H1 (cell line): ENCODE measurements at regions of chr7 and their contacts with region 1.

Region 1: DNA sequence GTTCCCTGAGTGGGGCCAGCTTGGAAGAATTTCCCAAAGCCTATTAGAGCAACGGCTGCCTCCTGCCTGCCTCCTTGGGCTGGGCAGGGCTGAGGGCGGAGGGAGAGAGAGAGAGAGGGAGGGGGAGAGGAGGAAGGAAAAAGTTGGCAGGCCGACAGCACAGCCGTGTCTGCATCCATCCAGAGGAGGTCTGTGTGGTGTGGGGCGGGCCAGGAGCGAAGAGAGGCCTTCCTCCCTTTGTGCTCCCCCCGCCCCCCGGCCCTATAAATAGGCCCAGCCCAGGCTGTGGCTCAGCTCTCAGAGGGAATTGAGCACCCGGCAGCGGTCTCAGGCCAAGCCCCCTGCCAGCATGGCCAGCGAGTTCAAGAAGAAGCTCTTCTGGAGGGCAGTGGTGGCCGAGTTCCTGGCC is at the start of gene AQP1:
- DNase-seq: no peak
- H3K4me3 ChIP-seq: no peak within 1 kb of the TSS
- H3K27ac ChIP-seq: no peak within 1 kb of the TSS
- H3K4me1 ChIP-seq: peaks cover 0 to 10% (median 4%) of the 10 kb centered on the region in 4 experiments; a peak in 4 of 7 replicates
- H3K27me3 ChIP-seq: peaks cover 0 to 2% (median 0%) of the 10 kb centered on the region in 4 experiments; a peak in 1 of 7 replicates
- CTCF ChIP-seq: no peak
- EP300 ChIP-seq: no peak
- POLR2A ChIP-seq: no peak
- RAD21 ChIP-seq: no peak
- total RNA-seq, gene AQP1: 0.17 and 0.19 TPM in 2 replicates

Region 2: GRCh38 chr7:30791114-30791779 is 120.3 kb before region 1 on chr7:
- CTCF ChIA-PET with region 1: interaction called, 14 read pairs
- POLR2A ChIA-PET with region 1: no interaction called
- DNase-seq: peak in 1 of 2 experiments; percentile 54
- H3K4me3 ChIP-seq: no peak overlapping the region
- H3K27ac ChIP-seq: no peak overlapping the region
- H3K4me1 ChIP-seq: 0 out of 7 replicates have a peak, but pooled peaks cover 0 to 3% (median 0%) of the 10 kb centered on the region in 4 experiments
- H3K27me3 ChIP-seq: no peaks in the 10 kb centered on the region
- CTCF ChIP-seq: peak; percentile 56 to 66 (median 60)
- EP300 ChIP-seq: no peak
- POLR2A ChIP-seq: no peak
- RAD21 ChIP-seq: peak; percentile 42 to 58; a peak in 3 of 4 replicates

Region 3: GRCh38 chr7:30800785-30801252 is 110.7 kb before region 1 on chr7:
- CTCF ChIA-PET with region 1: interaction called, 19 read pairs
- POLR2A ChIA-PET with region 1: no interaction called
- DNase-seq: peak; percentile 21 to 66
- H3K4me3 ChIP-seq: no peak overlapping the region
- H3K27ac ChIP-seq: no peak overlapping the region
- H3K4me1 ChIP-seq: no peaks in the 10 kb centered on the region
- H3K27me3 ChIP-seq: no peaks in the 10 kb centered on the region
- CTCF ChIP-seq: peak; percentile 31 to 88 (median 77)
- EP300 ChIP-seq: no peak
- POLR2A ChIP-seq: no peak
- RAD21 ChIP-seq: peak; percentile 98 to 99

Region 4: GRCh38 chr7:30880090-30880720 is 31.4 kb before region 1 on chr7:
- CTCF ChIA-PET with region 1: interaction called, 20 read pairs
- POLR2A ChIA-PET with region 1: no interaction called
- DNase-seq: no peak
- H3K4me3 ChIP-seq: no peak overlapping the region
- H3K27ac ChIP-seq: no peak overlapping the region
- H3K4me1 ChIP-seq: peaks cover 0 to 27% (median 12%) of the 10 kb centered on the region in 4 experiments; a peak in 6 of 7 replicates
- H3K27me3 ChIP-seq: no peaks in the 10 kb centered on the region
- CTCF ChIP-seq: no peak
- EP300 ChIP-seq: no peak
- POLR2A ChIP-seq: no peak
- RAD21 ChIP-seq: no peak

Region 5: GRCh38 chr7:30931161-30931928 is 19.8 kb after region 1 on chr7:
- CTCF ChIA-PET with region 1: interaction called, 55 read pairs
- POLR2A ChIA-PET with region 1: no interaction called
- DNase-seq: peak in 1 of 2 experiments; percentile 37
- H3K4me3 ChIP-seq: no peak overlapping the region
- H3K27ac ChIP-seq: no peak overlapping the region
- H3K4me1 ChIP-seq: peaks cover 0 to 9% (median 6%) of the 10 kb centered on the region in 4 experiments; a peak in 6 of 7 replicates
- H3K27me3 ChIP-seq: 0 out of 7 replicates have a peak, but pooled peaks cover 0 to 8% (median 0%) of the 10 kb centered on the region in 4 experiments
- CTCF ChIP-seq: no peak
- EP300 ChIP-seq: no peak
- POLR2A ChIP-seq: no peak
- RAD21 ChIP-seq: no peak; a peak in 1 of 4 replicates

Region 6: DNA sequence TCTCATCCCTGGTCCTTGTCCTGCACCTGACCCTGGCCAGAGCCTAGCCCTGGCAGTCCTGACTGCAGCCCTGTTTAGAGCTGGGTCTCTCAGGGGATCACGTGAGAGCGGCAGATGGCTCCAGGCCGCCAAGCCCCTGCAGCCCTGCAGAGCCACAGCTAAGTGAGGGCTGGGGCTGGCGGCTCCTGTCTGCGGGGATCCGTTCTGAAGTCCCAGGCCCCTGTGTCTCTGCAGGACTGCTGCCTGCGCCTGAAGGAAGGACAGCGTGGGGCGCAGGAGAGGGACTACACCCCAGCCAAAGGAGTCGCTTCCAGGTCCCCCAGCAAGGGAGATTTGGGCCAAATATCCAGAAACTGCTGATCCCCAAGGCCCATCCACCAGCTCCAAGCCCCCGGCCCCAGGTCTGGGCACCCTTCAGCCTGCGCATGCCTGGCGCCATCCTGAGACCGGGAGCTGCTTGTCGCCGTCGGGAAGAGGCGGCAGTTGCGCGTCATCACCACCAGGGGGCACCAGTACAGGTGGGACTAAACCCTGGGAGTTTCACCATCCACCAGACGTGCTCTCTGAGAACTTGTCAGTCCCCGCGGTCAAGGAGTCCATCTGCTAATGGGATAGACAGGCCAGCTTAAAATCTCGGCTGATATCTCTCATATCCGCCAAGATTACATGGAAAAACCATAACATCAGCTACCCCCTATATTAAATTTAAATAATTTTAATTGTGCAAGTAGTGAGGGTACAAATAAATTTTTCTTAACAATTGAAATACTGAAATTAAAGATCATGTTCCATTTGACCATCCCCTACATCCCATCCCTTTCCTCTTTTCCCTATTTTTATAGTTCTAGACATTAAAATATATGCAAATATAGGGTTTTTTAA is 27.1 kb after region 1 on chr7:
- CTCF ChIA-PET with region 1: interaction called, 55 read pairs
- POLR2A ChIA-PET with region 1: interaction called, 3 read pairs
- DNase-seq: peak; percentile 91 to 98
- H3K4me3 ChIP-seq: peak overlapping the region in 3 of 4 experiments; percentile 31 to 52 (median 34); a peak in 6 of 8 replicates
- H3K27ac ChIP-seq: peak overlapping the region; percentile 23; the same call in 1 of the 2 replicates
- H3K4me1 ChIP-seq: peaks cover 0 to 5% (median 4%) of the 10 kb centered on the region in 4 experiments; a peak in 6 of 7 replicates
- H3K27me3 ChIP-seq: 0 out of 7 replicates have a peak, but pooled peaks cover 0 to 2% (median 0%) of the 10 kb centered on the region in 4 experiments
- CTCF ChIP-seq: peak; percentile 96 to 100 (median 99)
- EP300 ChIP-seq: no peak
- POLR2A ChIP-seq: peak in 1 of 2 experiments; percentile 62; a peak in 2 of 3 replicates
- RAD21 ChIP-seq: peak; percentile 72 to 76

Region 7: DNA sequence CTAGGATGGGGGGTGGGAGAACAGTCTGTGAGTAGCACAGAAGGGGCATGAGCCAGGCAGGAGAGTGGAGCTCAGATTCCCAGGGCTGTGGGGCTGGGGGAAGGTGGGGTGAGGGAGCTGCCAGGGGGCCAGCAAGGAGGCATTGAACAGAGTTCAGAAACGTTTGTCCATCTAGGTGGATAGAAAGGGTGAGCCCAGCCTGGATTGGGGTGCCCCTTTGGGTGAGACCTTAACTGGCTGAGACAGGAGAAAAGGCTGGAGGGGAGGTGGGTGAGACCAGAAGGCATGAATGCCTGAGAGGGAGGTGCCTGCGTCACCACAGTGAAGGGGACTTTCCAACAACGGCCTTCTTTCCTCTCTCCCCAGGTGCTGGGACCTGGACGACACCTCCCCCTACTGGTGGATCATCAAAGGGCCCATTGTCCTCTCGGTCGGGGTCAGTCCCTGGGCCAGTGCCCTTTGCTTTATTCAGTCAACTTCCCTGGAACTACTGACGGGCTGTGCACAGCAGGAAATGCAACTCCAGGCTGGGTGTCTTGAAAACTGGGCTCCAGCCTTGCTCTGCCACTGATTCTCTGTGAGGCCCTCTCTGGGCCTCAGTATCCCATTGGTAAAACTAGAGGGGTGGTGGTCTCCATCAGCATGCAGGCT is 63.2 kb after region 1 on chr7:
- CTCF ChIA-PET with region 1: interaction called, 42 read pairs
- POLR2A ChIA-PET with region 1: no interaction called
- DNase-seq: peak; percentile 36 to 87
- H3K4me3 ChIP-seq: no peak overlapping the region
- H3K27ac ChIP-seq: no peak overlapping the region
- H3K4me1 ChIP-seq: peaks cover 0 to 7% (median 4%) of the 10 kb centered on the region in 4 experiments; a peak in 4 of 7 replicates
- H3K27me3 ChIP-seq: no peaks in the 10 kb centered on the region; a peak in 2 of 7 replicates
- CTCF ChIP-seq: peak; percentile 91 to 94 (median 91)
- EP300 ChIP-seq: peak in 1 of 2 experiments; percentile 68; a peak in 1 of 3 replicates
- POLR2A ChIP-seq: no peak
- RAD21 ChIP-seq: peak; percentile 85 to 87

Region 8: DNA sequence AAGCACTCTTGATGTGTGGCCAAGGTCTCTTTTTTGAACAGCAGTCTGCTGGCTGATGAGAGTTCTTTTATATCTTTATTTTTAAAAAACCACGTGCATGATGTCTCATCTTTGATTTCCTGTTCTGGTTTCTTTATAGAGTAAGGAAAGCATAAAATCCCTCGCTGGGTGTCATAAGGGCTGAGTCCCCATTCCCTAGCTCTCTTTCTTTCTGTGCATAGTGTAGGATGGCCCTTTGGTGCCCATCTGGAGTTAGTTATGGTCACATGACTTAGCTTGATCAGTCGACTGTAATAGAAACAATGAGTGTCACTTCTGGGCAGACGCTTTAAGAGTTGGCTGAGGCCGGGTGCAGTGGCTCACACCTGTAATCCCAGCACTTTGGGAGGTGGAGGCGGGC is 90.7 kb after region 1 on chr7:
- CTCF ChIA-PET with region 1: no interaction called
- POLR2A ChIA-PET with region 1: no interaction called
- DNase-seq: no peak
- H3K4me3 ChIP-seq: no peak overlapping the region
- H3K27ac ChIP-seq: no peak overlapping the region
- H3K4me1 ChIP-seq: 0 out of 7 replicates have a peak, but pooled peaks cover 0 to 3% (median 0%) of the 10 kb centered on the region in 4 experiments
- H3K27me3 ChIP-seq: no peaks in the 10 kb centered on the region
- CTCF ChIP-seq: no peak
- EP300 ChIP-seq: no peak
- POLR2A ChIP-seq: no peak
- RAD21 ChIP-seq: no peak